ENCODE measurements at regions of chr9 and their contacts with region 1.

Region 1: GRCh38 chr9:36995927-36996705 is 38.0 kb downstream of the PAX5 start:
- DNase-seq: peak; percentile 55 to 69 (median 62)
- H3K4me3 ChIP-seq: peak overlapping the region in 5 of 7 experiments; percentile 10 to 61 (median 42)
- H3K27ac ChIP-seq: no peak overlapping the region
- H3K4me1 ChIP-seq: peaks cover 0 to 3% (median 1%) of the 10 kb centered on the region in 4 experiments
- H3K27me3 ChIP-seq: peaks cover 0 to 67% (median 29%) of the 10 kb centered on the region in 5 experiments

Region 2: DNA sequence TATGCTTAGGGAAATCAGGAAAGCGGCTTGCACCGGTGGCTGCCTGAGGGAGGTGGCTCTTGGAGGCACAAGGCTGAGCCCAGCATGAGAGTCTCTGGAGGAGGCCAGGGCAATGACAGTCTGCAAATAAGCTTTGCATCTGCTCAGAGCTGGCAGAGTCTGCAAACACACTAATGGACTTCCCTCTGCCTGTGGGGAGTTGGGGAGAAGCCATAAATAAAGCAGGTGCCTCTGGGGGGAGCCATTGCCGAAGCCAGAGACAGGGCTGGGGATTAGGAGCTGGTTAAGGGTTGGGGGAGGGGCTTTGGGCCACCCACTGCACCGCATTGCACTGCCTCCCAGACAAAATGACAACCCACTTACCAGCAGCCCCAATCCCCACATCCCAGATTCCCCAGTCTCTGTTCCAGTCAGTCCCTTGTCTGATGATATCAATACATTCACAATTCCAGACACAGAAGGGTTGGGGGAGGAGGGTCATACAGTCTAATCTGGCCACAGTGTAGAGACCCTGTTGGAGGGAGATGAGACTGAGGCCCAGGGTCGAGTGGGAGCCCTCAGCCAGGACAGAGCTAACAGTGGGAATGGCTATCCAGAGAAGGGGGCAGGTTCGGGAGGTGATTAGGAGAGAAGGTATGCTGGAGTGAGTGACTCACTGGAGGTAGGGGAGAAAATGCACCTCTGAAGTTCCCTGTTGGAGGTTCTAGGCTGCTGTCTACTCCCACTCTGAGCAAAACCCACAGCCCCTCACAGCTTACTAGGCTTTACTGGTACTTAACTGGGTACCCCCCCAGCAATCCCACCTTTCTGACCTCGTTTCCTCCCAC is 15.8 kb before region 1 on chr9:
- CTCF ChIA-PET with region 1: interaction called, 12 read pairs
- POLR2A ChIA-PET with region 1: interaction called, 5 read pairs
- DNase-seq: peak in 1 of 3 donors; percentile 11
- H3K4me3 ChIP-seq: no peak overlapping the region
- H3K27ac ChIP-seq: no peak overlapping the region
- H3K4me1 ChIP-seq: peaks cover 0 to 1% (median 0%) of the 10 kb centered on the region in 4 experiments
- H3K27me3 ChIP-seq: peaks cover 0 to 38% (median 28%) of the 10 kb centered on the region in 5 experiments

Region 3: DNA sequence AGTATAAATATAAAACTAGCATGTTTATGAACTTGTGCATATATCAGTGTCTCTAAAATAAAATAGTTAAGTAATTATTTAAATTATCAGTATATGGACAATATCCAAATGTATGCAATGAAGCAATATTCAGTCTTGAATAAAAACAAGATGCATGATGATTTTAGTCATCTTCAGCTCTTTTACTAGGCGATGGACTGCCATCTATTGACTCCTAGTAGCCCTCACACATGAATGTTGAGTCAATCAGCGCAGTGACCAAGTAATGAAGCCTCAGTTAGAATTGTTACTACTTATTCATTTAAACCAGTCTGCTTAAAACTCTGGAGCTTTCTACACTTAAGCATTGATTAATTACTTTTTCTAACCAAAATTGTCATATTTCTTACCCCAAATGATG is 333.5 kb after region 1 on chr9:
- CTCF ChIA-PET with region 1: interaction called, 27 read pairs
- POLR2A ChIA-PET with region 1: no interaction called
- DNase-seq: peak; percentile 31 to 59 (median 55)
- H3K4me3 ChIP-seq: no peak overlapping the region
- H3K27ac ChIP-seq: no peak overlapping the region
- H3K4me1 ChIP-seq: peaks cover 0 to 3% (median 0%) of the 10 kb centered on the region in 4 experiments
- H3K27me3 ChIP-seq: no peaks in the 10 kb centered on the region